Activated CD4-positive, alpha-beta T cell treated with anti-CD3 and anti-CD28 coated beads, Interleukin-2, amount 10 ng/mL, durations not matched to agents 24 days and 14 days (primary cell): ENCODE measurements at regions of chr19 and their contacts with region 1.

Region 1: DNA sequence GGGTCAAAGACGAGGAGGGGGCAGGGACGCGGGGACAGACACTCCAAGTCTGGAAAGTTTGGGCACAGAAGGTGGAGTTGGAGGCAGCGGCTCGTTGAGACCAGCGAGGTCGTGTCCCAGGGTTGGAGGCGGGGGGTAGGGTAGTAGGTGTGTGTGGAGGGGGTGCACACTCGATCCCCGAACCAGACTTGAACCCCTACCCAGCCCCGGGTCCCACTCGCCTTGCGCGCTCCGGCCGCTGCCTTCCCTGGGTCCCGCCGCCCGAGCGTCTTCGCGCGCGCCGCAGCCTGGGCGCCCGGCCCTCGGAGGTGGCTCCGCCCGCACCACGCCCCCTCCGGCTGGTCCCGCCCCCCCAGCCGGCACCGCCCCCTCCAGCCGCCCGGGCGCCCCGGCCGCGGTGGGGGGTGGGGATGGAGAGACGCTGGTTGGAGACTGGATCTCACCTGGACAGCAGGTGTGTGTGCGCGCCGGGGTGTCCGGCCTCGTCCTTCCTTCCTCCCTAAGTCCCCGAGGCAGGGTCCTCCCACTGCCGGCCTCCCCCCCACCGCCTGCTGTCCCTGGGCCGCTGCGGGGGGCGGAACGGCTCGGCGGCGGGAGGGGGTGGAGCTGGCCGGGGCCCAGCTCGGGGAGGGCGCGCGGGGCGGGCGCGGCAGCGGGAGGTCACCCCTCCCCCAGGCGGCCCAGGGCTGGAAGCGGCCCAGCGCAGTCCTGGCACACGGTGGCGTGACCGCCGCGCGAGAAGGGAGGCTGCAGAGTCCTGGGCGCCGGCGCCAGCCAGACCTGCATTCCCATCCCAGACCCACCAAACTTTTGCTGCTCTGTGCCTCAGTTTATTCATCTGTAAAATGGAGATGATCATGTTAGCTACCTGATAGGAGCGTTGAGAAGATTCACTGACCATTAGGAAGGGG is at the start of gene KANK2:
- DNase-seq: peak; percentile 93
- H3K4me3 Mint-ChIP-seq: peak within 1 kb of the TSS; percentile 84
- H3K27ac Mint-ChIP-seq: peak within 1 kb of the TSS; percentile 25
- H3K4me1 Mint-ChIP-seq: peaks cover 7% of the 10 kb centered on the region
- H3K27me3 Mint-ChIP-seq: peaks cover 13% of the 10 kb centered on the region
- total RNA-seq, gene KANK2: 3.0 and 3.3 TPM in 2 replicates

Region 2: DNA sequence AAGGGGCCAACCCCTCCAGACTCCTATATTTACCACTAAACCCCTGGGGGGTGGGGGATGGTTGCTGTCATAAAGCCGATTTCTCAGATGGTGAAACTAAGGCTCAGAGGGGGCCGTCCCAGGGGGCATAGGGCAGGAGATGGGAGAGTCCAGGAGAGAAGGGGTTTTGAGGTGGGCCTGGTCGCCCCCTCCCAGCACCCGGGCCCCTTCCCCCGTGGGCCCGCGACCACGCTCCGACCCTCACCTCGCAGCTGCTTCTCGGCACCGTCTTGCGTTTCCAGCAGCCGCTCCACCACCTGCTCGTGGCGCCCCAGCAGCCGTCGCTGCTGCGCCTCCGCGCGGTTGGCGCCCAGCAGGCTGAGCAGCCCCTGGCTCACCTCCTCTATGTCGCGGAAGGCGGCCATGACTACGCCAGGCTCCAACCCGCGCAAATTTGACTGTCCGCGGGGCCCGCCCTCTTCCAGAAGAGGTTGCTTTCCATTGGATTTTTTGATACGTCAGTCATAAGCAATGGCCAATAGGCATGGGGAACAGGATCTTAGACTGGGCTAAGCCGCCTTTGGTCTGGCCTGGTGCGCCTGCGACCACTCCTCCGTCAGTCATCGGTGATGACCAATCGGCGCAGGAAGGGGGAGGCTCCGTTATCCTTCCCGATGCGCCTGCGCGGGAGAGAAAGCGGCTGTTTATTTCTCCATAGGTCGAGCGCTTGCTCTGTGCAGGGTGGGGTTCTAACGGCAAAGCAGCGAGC is 42.0 kb before region 1 on chr19 and contains the start of gene SPC24:
- intact Hi-C with region 1: loop called (anchors 5 kb)
- DNase-seq: peak; percentile 98
- H3K4me3 Mint-ChIP-seq: peak within 1 kb of the TSS; percentile 84
- H3K27ac Mint-ChIP-seq: peak within 1 kb of the TSS; percentile 81
- H3K4me1 Mint-ChIP-seq: peaks cover 27% of the 10 kb centered on the region
- H3K27me3 Mint-ChIP-seq: no peaks in the 10 kb centered on the region
- total RNA-seq, gene SPC24: 33.1 and 33.8 TPM in 2 replicates

Region 3: DNA sequence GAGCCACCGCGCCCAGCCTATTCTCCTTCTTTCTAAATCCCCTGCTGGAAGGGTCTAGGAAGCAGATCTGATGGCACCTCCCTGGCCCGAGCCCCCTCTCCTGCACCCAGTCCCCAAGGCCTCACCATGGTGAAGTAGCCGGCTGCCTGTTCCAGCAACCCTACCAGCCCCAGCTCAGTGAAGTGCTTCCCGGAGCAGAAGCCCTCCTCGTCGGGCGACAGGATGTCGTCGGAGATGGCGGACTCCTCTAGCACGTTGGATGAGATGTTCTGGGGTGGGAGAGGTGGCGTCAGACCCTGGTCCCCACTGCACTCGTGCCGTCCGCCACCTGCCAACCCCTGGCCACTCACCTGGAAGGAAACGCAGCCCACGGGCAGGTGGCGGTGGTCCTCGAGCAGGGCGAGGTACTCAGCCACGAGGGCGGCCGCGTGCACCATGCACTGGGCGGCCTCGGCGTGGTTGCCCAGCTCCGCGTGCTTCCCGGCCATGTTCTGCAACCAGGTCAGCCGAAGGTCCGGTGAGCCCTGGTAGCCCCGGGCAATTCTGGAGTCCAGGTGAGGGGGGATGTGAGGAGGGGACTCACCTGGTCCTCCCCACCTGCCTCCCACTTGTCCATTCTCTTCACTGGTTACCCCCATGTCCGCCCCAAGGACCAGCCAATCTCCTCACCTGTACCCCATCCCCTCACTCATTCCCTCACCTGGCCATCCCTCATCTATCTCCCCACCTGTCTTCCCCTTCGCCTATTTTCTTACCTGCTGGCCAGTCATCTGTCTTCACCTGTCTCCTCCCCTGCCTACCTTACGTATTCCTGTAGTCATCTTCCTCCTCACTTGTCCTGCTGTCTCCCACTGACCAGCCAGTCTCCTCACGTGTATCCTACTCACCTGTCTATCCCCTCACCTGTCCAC is 11.3 kb after region 1 on chr19:
- intact Hi-C with region 1: no loop called
- DNase-seq: no peak
- H3K4me3 Mint-ChIP-seq: no peak overlapping the region
- H3K27ac Mint-ChIP-seq: no peak overlapping the region
- H3K4me1 Mint-ChIP-seq: peaks cover 2% of the 10 kb centered on the region
- H3K27me3 Mint-ChIP-seq: peaks cover 10% of the 10 kb centered on the region